ENCODE measurements at regions of chr3 and their contacts with region 1.

Region 1: DNA sequence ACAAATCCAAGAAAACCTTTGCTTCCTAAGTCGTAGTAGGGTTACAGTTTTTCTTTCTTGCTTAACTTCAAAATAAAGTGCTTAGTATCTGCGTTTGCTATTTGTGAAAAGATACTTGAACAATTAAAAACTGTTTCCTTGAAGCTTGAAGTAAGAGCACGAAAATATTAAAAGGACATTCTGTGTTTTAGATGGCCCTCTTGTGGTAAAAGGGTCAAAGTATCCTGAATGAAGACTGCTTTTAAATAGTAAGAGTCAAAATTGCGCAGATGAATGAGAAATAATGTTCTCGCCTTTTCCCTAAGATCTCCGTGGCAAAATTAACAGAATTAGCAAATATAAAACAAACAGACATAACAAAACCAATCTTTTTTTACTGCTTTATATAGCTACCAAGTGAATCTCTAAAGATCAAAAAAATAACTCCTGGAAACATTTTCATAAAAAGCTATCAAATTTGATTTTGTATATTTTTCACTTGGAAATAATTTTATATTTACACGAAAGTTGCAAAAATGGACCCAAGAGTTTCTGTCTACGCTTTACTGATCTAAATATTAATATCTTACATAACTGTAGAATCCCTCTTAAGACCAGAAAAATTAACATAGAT is 175.4 kb downstream of the MBNL1 start:
- DNase-seq: peak; percentile 33
- ATAC-seq: peak; percentile 75
- H3K4me3 ChIP-seq: no peak overlapping the region
- H3K27ac ChIP-seq: no peak overlapping the region; the same call in 1 of the 2 replicates
- H3K4me1 ChIP-seq: peaks cover 13% of the 10 kb centered on the region; the same call in 1 of the 2 replicates
- H3K27me3 ChIP-seq: no peaks in the 10 kb centered on the region
- CTCF ChIP-seq: peak; percentile 48 to 70 (median 59); a peak in 5 of 6 replicates
- EP300 ChIP-seq: no peak
- POLR2A ChIP-seq: no peak
- RAD21 ChIP-seq: peak; percentile 91

Region 2: GRCh38 chr3:151918253-151919029 is 525.7 kb before region 1 on chr3:
- CTCF ChIA-PET with region 1: interaction called, 13 read pairs
- POLR2A ChIA-PET with region 1: no interaction called
- RAD21 ChIA-PET with region 1: interaction called, 3 read pairs
- SMC1A ChIA-PET with region 1: interaction called, 5 read pairs
- in situ Hi-C with region 1: no loop called
- intact Hi-C with region 1: no loop called
- DNase-seq: peak; percentile 16
- ATAC-seq: peak; percentile 89
- H3K4me3 ChIP-seq: no peak overlapping the region
- H3K27ac ChIP-seq: no peak overlapping the region
- H3K4me1 ChIP-seq: no peaks in the 10 kb centered on the region
- H3K27me3 ChIP-seq: no peaks in the 10 kb centered on the region
- CTCF ChIP-seq: peak; percentile 44 to 74 (median 55); a peak in 5 of 6 replicates
- EP300 ChIP-seq: no peak
- POLR2A ChIP-seq: no peak
- RAD21 ChIP-seq: peak; percentile 86

Region 3: GRCh38 chr3:152183473-152183872 is 260.7 kb before region 1 on chr3:
- CTCF ChIA-PET with region 1: interaction called, 282 read pairs
- POLR2A ChIA-PET with region 1: interaction called, 3 read pairs
- RAD21 ChIA-PET with region 1: interaction called, 138 read pairs
- SMC1A ChIA-PET with region 1: interaction called, 211 read pairs
- in situ Hi-C with region 1: loop called (anchors 5 kb)
- intact Hi-C with region 1: loop called (anchors 1 kb)
- DNase-seq: no peak
- ATAC-seq: peak; percentile 95
- H3K4me3 ChIP-seq: no peak overlapping the region
- H3K27ac ChIP-seq: no peak overlapping the region
- H3K4me1 ChIP-seq: no peaks in the 10 kb centered on the region
- H3K27me3 ChIP-seq: no peaks in the 10 kb centered on the region
- CTCF ChIP-seq: peak; percentile 63 to 67 (median 65)
- EP300 ChIP-seq: no peak
- POLR2A ChIP-seq: no peak
- RAD21 ChIP-seq: peak; percentile 70

Region 4: GRCh38 chr3:152258448-152259393 is 185.4 kb before region 1 on chr3:
- CTCF ChIA-PET with region 1: interaction called, 8 read pairs
- POLR2A ChIA-PET with region 1: no interaction called
- RAD21 ChIA-PET with region 1: interaction called, 3 read pairs
- SMC1A ChIA-PET with region 1: interaction called, 27 read pairs
- in situ Hi-C with region 1: no loop called
- intact Hi-C with region 1: no loop called
- DNase-seq: no peak
- ATAC-seq: peak; percentile 75
- H3K4me3 ChIP-seq: no peak overlapping the region; the same call in 1 of the 2 replicates
- H3K27ac ChIP-seq: peak overlapping the region; percentile 11; the same call in 1 of the 2 replicates
- H3K4me1 ChIP-seq: peaks cover 27% of the 10 kb centered on the region
- H3K27me3 ChIP-seq: no peaks in the 10 kb centered on the region
- CTCF ChIP-seq: no peak
- EP300 ChIP-seq: no peak
- POLR2A ChIP-seq: no peak
- RAD21 ChIP-seq: no peak

Region 5: GRCh38 chr3:152309535-152310307 is 134.4 kb before region 1 on chr3:
- CTCF ChIA-PET with region 1: interaction called, 5 read pairs
- POLR2A ChIA-PET with region 1: no interaction called
- RAD21 ChIA-PET with region 1: interaction called, 5 read pairs
- SMC1A ChIA-PET with region 1: interaction called, 12 read pairs
- in situ Hi-C with region 1: no loop called
- intact Hi-C with region 1: no loop called
- DNase-seq: no peak
- ATAC-seq: peak; percentile 49
- H3K4me3 ChIP-seq: no peak overlapping the region
- H3K27ac ChIP-seq: no peak overlapping the region
- H3K4me1 ChIP-seq: no peaks in the 10 kb centered on the region
- H3K27me3 ChIP-seq: no peaks in the 10 kb centered on the region
- CTCF ChIP-seq: no peak
- EP300 ChIP-seq: no peak
- POLR2A ChIP-seq: no peak
- RAD21 ChIP-seq: no peak

Region 6: GRCh38 chr3:152385761-152386160 is 58.4 kb before region 1 on chr3:
- CTCF ChIA-PET with region 1: interaction called, 10 read pairs
- POLR2A ChIA-PET with region 1: no interaction called
- RAD21 ChIA-PET with region 1: interaction called, 9 read pairs
- SMC1A ChIA-PET with region 1: interaction called, 25 read pairs
- in situ Hi-C with region 1: no loop called
- intact Hi-C with region 1: no loop called
- DNase-seq: no peak
- ATAC-seq: no peak
- H3K4me3 ChIP-seq: no peak overlapping the region
- H3K27ac ChIP-seq: peak overlapping the region; percentile 13; the same call in 1 of the 2 replicates
- H3K4me1 ChIP-seq: peaks cover 6% of the 10 kb centered on the region; the same call in 1 of the 2 replicates
- H3K27me3 ChIP-seq: no peaks in the 10 kb centered on the region
- CTCF ChIP-seq: no peak
- EP300 ChIP-seq: no peak
- POLR2A ChIP-seq: no peak
- RAD21 ChIP-seq: no peak

Region 7: GRCh38 chr3:152430223-152431002 is 13.7 kb before region 1 on chr3:
- CTCF ChIA-PET with region 1: interaction called, 27 read pairs
- POLR2A ChIA-PET with region 1: interaction called, 4 read pairs
- RAD21 ChIA-PET with region 1: interaction called, 4 read pairs
- SMC1A ChIA-PET with region 1: interaction called, 39 read pairs
- in situ Hi-C with region 1: no loop called
- intact Hi-C with region 1: no loop called
- DNase-seq: no peak
- ATAC-seq: no peak
- H3K4me3 ChIP-seq: no peak overlapping the region
- H3K27ac ChIP-seq: no peak overlapping the region
- H3K4me1 ChIP-seq: no peaks in the 10 kb centered on the region
- H3K27me3 ChIP-seq: no peaks in the 10 kb centered on the region
- CTCF ChIP-seq: no peak
- EP300 ChIP-seq: no peak
- POLR2A ChIP-seq: no peak
- RAD21 ChIP-seq: no peak

Region 8: DNA sequence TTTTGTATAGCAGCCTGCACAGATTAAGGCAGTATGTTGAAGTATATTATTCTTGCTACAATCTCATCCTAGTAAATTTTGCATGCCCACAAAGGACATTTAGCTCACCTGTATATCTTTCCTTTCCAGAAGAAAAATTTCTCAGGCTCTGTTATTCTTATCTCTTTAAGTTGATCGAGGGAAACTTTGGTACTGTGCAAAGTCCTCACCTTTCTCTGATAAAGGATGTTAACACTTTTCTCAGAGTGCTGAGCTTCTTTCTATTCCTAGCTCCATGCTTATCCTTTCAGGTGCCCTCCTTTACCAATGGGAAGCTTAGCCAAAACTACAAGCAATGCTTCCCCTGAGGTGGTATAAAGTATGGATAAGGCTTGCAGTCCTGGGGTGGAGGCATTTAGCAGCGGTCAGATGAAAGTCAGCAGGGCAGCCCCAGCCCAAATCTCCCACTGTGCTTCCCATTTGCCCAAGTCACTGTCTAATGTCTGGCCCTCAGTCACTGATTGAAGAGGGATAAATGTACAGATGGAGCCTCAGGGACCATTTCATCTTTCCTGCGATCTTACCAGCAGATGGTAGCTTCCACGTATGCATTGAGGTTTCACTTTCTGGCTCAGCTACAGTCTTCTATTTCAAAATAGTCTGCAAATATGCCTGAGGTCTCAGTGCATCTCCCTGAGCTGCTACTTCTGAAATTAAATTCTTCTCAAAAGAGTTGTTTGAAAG is 263.0 kb after region 1 on chr3:
- CTCF ChIA-PET with region 1: no interaction called
- POLR2A ChIA-PET with region 1: no interaction called
- RAD21 ChIA-PET with region 1: no interaction called
- SMC1A ChIA-PET with region 1: no interaction called
- in situ Hi-C with region 1: no loop called
- intact Hi-C with region 1: no loop called
- DNase-seq: no peak
- ATAC-seq: no peak
- H3K4me3 ChIP-seq: no peak overlapping the region; the same call in 1 of the 2 replicates
- H3K27ac ChIP-seq: no peak overlapping the region
- H3K4me1 ChIP-seq: peaks cover 3% of the 10 kb centered on the region; the same call in 1 of the 2 replicates
- H3K27me3 ChIP-seq: no peaks in the 10 kb centered on the region
- CTCF ChIP-seq: no peak
- EP300 ChIP-seq: no peak
- POLR2A ChIP-seq: no peak
- RAD21 ChIP-seq: peak; percentile 36; the same call in 1 of the 2 replicates

Region 9: GRCh38 chr3:152769523-152769922 is 325.4 kb after region 1 on chr3:
- CTCF ChIA-PET with region 1: no interaction called
- POLR2A ChIA-PET with region 1: no interaction called
- RAD21 ChIA-PET with region 1: no interaction called
- SMC1A ChIA-PET with region 1: no interaction called
- in situ Hi-C with region 1: no loop called
- intact Hi-C with region 1: no loop called
- DNase-seq: no peak
- ATAC-seq: peak; percentile 75
- H3K4me3 ChIP-seq: no peak overlapping the region
- H3K27ac ChIP-seq: no peak overlapping the region
- H3K4me1 ChIP-seq: no peaks in the 10 kb centered on the region
- H3K27me3 ChIP-seq: no peaks in the 10 kb centered on the region
- CTCF ChIP-seq: no peak
- EP300 ChIP-seq: no peak
- POLR2A ChIP-seq: no peak
- RAD21 ChIP-seq: no peak

Region 10: DNA sequence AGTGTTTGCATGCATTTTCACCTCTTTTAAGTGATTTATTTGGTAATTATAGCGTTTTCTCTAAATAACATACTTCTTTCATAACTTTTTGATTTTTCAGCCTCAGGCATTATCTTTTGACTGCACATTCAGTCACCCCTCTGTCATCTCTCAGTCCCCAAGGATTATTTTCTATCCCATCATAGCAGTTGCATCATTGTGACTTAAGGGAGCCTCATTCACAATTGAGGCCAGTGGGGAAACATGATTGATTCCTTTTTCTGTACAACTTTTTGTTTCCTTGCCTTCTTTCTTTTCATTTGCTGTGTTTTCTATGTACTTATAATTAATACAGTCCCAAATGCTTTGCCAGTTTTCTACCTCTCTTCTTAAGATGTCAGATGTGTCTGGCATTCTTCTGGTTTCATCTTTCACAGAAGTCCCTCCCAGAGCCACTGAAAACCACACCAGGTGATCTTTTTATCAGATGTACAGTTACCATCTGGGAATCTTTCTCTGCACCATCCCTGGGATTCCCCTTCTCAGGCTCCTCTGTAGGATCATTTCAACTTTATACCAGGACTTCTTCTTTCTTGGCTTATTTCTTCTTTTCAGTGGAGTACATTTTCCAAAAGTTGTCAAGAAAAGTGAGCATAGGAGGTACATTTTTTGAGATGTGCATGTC is 869.3 kb after region 1 on chr3:
- CTCF ChIA-PET with region 1: no interaction called
- POLR2A ChIA-PET with region 1: no interaction called
- RAD21 ChIA-PET with region 1: no interaction called
- SMC1A ChIA-PET with region 1: no interaction called
- in situ Hi-C with region 1: no loop called
- intact Hi-C with region 1: no loop called
- DNase-seq: no peak
- ATAC-seq: no peak
- H3K4me3 ChIP-seq: no peak overlapping the region
- H3K27ac ChIP-seq: peak overlapping the region; percentile 39; the same call in 1 of the 2 replicates
- H3K4me1 ChIP-seq: no peaks in the 10 kb centered on the region
- H3K27me3 ChIP-seq: no peaks in the 10 kb centered on the region
- CTCF ChIP-seq: no peak
- EP300 ChIP-seq: no peak
- POLR2A ChIP-seq: no peak
- RAD21 ChIP-seq: no peak

Measured in GM12878 (cell line).